Panc1 (cell line): ENCODE measurements at regions of chr10 and their contacts with region 1.

Region 1: GRCh38 chr10:86301971-86302370 is 64.6 kb downstream of the GRID1 start:
- DNase-seq: no peak
- ATAC-seq: no peak
- H3K4me3 ChIP-seq: no peak overlapping the region
- H3K27ac ChIP-seq: no peak overlapping the region
- H3K4me1 ChIP-seq: no peaks in the 10 kb centered on the region
- H3K27me3 ChIP-seq: peaks cover 10% of the 10 kb centered on the region
- CTCF ChIP-seq: no peak

Region 2: DNA sequence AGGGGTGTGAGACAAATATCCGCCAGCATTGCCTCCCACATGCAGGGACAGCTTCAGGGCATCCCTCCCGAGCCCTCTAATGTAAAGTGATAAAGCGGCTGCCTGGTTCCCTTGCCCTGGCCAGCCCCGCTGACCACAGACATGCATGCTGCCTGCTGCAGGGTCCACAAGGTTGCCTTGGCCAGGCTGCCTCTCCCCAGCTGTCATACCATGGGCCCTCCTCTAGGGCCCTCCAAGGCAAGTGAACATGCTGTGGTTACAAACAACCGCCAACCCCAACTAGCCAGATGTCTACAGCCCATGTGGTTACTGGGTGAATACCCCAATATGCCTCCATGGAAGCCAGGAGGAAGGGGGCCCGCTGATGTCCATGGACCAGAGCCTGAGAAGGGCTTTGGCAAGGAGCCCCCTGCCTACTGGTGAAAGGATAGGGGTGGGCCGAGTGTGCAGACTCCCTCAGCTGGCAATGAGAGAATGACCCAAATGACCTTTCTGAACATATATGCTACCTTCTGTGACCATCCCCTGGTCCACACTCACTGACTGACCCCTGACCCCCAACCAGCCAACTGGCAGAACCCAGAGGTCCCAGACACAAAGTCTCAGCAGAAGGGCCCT is 27.2 kb after region 1 on chr10:
- CTCF ChIA-PET with region 1: no interaction called
- POLR2A ChIA-PET with region 1: no interaction called
- in situ Hi-C with region 1: no loop called
- intact Hi-C with region 1: loop called (anchors 2 kb)
- DNase-seq: no peak
- ATAC-seq: no peak
- H3K4me3 ChIP-seq: no peak overlapping the region
- H3K27ac ChIP-seq: no peak overlapping the region
- H3K4me1 ChIP-seq: no peaks in the 10 kb centered on the region
- H3K27me3 ChIP-seq: peaks cover 7% of the 10 kb centered on the region; the same call in 1 of the 2 replicates
- CTCF ChIP-seq: no peak